Dorsolateral prefrontal cortex (tissue), 120 donors: ENCODE measurements at regions of chr20 and their contacts with region 1.

Region 1: DNA sequence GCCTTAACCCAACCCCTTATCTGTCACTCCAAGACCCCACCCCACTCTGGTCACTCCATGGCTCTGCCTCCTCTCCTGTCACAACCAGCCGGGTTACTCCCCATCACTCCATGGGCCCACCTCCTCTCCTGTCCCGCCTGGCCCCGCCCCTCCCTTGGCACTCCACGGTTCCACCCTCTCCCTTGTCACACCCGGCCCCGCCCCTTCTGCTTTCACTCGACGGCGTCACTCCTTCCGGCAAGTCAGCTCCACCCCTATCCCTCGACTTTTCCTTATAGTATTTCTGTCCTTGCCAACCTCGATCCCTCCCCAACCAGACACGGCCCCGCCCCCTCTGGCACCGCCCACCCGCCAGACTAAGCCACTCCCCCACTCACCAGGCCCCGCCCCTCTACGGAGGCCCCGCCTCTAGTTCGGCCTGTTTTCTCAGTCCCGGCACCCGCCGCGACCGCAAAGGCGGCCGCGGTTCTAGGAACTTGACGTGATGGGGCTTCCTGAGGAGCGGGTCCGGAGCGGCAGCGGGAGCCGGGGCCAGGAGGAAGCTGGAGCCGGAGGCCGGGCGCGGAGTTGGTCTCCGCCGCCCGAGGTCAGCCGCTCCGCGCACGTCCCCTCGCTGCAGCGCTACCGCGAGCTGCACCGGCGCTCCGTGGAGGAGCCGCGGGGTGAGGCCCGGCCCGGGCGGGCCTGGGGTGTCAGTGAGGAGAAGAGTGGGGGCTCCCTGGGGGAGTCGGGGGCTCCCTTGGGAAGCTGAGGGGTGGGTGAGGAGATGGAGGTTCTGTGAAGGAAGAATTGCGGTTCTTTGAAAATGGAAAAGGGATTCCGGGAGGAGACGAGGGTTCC is at the start of gene ACSS2:
- DNase-seq: peak; percentile 93 to 100 (median 98)
- H3K4me3 ChIP-seq: peak within 1 kb of the TSS; percentile 58 to 95 (median 87)
- H3K27ac ChIP-seq: peak within 1 kb of the TSS; percentile 39 to 96 (median 88)
- H3K27me3 ChIP-seq: no peaks in the 10 kb centered on the region
- CTCF ChIP-seq: peak in 11 of 56 donors; percentile 2 to 41 (median 12)
- total RNA-seq, gene ACSS2: 35.5 to 131 (median 55.8) TPM

Region 2: DNA sequence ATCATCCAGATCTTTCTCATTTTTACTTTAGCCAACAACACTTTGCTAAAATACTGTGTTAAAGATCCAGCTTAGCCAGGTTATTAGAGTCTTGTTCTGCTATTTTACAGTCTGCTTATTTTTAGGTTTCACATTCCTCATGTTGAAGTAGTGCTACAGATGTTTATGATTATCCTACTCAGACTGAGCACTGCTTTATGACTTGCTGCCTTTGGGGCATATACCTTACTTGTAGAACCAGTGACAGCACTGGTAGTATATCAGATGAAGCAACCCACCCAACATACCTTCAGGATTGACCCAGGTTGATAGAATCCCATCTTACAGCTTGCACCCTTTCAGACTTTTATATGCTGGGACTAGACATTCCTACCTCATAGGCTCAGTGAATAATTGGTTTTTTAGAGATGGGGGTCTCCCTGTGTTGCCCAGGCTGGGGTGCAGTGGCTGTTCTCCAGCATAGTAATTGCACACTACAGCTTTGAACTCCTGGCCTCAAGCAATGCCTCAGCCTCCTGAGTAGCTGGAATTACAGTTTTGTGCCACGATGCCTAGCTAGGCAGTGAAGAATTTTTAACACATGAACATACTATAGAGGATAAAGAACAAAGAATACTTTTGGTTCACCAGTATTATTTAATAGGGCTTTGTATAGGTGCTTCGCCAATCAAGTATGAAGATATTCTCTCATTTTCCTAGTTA is 423.9 kb before region 1 on chr20:
- intact Hi-C with region 1: no loop called
- DNase-seq: no peak
- H3K4me3 ChIP-seq: no peak overlapping the region
- H3K27ac ChIP-seq: peak overlapping the region in 41 of 59 donors; percentile 8 to 66 (median 43)
- H3K27me3 ChIP-seq: no peaks in the 10 kb centered on the region
- CTCF ChIP-seq: no peak

Region 3: GRCh38 chr20:34825530-34826362 is 50.6 kb before region 1 on chr20 and contains the start of gene NCOA6:
- intact Hi-C with region 1: loop called (anchors 5 kb)
- DNase-seq: peak; percentile 81 to 92 (median 86)
- H3K4me3 ChIP-seq: peak within 1 kb of the TSS; percentile 65 to 93 (median 83)
- H3K27ac ChIP-seq: peak within 1 kb of the TSS; percentile 71 to 98 (median 91)
- H3K27me3 ChIP-seq: no peaks in the 10 kb centered on the region
- CTCF ChIP-seq: peak in 14 of 56 donors; percentile 11 to 40 (median 18)
- total RNA-seq, gene NCOA6: 29.3 to 53.5 (median 39.1) TPM

Region 4: GRCh38 chr20:34955232-34956040 is 79.1 kb after region 1 on chr20 and contains the starts of genes GSS and MYH7B:
- intact Hi-C with region 1: loop called (anchors 1 kb)
- DNase-seq: peak; percentile 94 to 98 (median 96)
- H3K4me3 ChIP-seq: peak within 1 kb of the TSS; percentile 59 to 92 (median 78)
- H3K27ac ChIP-seq: peak within 1 kb of the TSS; percentile 80 to 98 (median 93)
- H3K27me3 ChIP-seq: no peaks in the 10 kb centered on the region
- CTCF ChIP-seq: peak in 38 of 56 donors; percentile 6 to 72 (median 46)
- total RNA-seq, gene GSS: 16.3 to 49.2 (median 35.7) TPM
- total RNA-seq, gene MYH7B: 8.0 to 38.2 (median 21.1) TPM

Region 5: GRCh38 chr20:35207950-35208611 is 331.7 kb after region 1 on chr20:
- intact Hi-C with region 1: loop called (anchors 2 to 5 kb)
- DNase-seq: peak in 9 of 10 donors; percentile 48 to 84 (median 74)
- H3K4me3 ChIP-seq: peak overlapping the region in 7 of 59 donors; percentile 2 to 28 (median 10)
- H3K27ac ChIP-seq: peak overlapping the region in 48 of 59 donors; percentile 1 to 88 (median 55)
- H3K27me3 ChIP-seq: no peaks in the 10 kb centered on the region
- CTCF ChIP-seq: peak; percentile 63 to 91 (median 84)